ENCODE measurements at regions of chr17 and their contacts with region 1.

Region 1: DNA sequence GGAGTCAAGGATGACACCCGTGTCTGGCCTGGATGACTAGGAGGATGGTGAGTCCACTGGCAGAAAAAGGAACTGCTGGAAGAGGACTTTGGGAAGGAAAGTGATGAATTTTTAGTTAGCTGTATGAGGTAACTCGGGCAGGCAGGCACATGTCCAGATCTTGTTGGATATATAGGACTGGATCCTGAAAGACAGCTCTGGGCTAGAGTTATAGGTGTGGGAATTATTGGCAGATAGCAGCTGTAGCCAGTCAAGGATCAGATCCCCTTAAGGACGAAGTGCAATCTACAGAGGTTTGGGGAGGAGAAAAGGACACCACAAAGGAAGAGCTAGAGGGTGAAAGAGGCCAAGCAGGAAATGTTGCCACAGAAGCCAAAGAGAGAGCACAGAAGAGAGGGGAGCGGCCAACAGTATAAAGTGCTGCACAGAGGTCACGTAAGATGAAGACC is 10.1 kb downstream of the CYB5D1 start:
- DNase-seq: no peak
- ATAC-seq: no peak
- H3K4me3 ChIP-seq: no peak overlapping the region
- H3K27ac ChIP-seq: no peak overlapping the region
- H3K4me1 ChIP-seq: no peaks in the 10 kb centered on the region
- H3K27me3 ChIP-seq: no peaks in the 10 kb centered on the region
- CTCF ChIP-seq: no peak

Region 2: GRCh38 chr17:7956228-7956965 is 88.5 kb after region 1 on chr17:
- intact Hi-C with region 1: no loop called
- DNase-seq: peak in 1 of 6 donors; percentile 22
- ATAC-seq: no peak
- H3K4me3 ChIP-seq: no peak overlapping the region
- H3K27ac ChIP-seq: no peak overlapping the region
- H3K4me1 ChIP-seq: no peaks in the 10 kb centered on the region
- H3K27me3 ChIP-seq: peaks cover 0 to 6% (median 2%) of the 10 kb centered on the region in 4 donors
- CTCF ChIP-seq: no peak

Region 3: GRCh38 chr17:7982666-7983065 is 114.8 kb after region 1 on chr17:
- intact Hi-C with region 1: loop called in 2 of 3 experiments (anchors 5 to 10 kb)
- DNase-seq: no peak
- ATAC-seq: no peak
- H3K4me3 ChIP-seq: no peak overlapping the region
- H3K27ac ChIP-seq: no peak overlapping the region
- H3K4me1 ChIP-seq: no peaks in the 10 kb centered on the region
- H3K27me3 ChIP-seq: no peaks in the 10 kb centered on the region
- CTCF ChIP-seq: no peak

Measured in pancreas (tissue), 10 donors.